CD8-positive, alpha-beta T cell (primary cell): ENCODE measurements at regions of chr2 and their contacts with region 1.

Region 1: DNA sequence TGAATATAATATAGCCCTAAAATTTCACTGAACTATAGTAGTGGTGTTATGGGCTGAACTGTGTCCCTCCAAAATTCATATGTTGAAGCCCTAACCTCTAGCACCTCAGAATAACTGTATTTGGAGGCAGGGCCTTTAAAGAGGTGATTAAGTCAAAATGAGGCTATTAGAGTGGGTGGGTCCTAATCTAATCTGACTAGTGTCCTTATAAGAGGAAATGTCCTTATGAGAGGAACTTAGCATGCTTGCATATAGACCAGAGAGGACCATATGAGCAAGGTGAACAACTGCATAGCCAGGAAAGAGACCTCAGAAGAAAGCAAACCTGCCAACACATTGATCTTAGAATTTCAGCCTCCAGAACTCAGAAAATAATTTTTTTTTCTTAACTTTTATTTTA is 238.4 kb downstream of the ZEB2 start:
- DNase-seq: no peak
- ATAC-seq: no peak
- H3K4me3 ChIP-seq: no peak overlapping the region
- H3K4me3 Mint-ChIP-seq: no peak overlapping the region
- H3K27ac ChIP-seq: no peak overlapping the region
- H3K27ac Mint-ChIP-seq: no peak overlapping the region
- H3K4me1 ChIP-seq: no peaks in the 10 kb centered on the region
- H3K4me1 Mint-ChIP-seq: peaks cover 35% of the 10 kb centered on the region
- H3K27me3 ChIP-seq: no peaks in the 10 kb centered on the region
- H3K27me3 Mint-ChIP-seq: no peaks in the 10 kb centered on the region
- CTCF ChIP-seq: no peak

Region 2: GRCh38 chr2:144237830-144238627 is 43.4 kb before region 1 on chr2:
- CTCF ChIA-PET with region 1: no interaction called
- POLR2A ChIA-PET with region 1: interaction called, 3 read pairs
- intact Hi-C with region 1: loop called in 1 of 2 experiments (anchors 2 kb)
- DNase-seq: peak in 1 of 9 experiments; percentile 35
- ATAC-seq: no peak
- H3K4me3 ChIP-seq: no peak overlapping the region
- H3K4me3 Mint-ChIP-seq: no peak overlapping the region
- H3K27ac ChIP-seq: no peak overlapping the region
- H3K27ac Mint-ChIP-seq: peak overlapping the region; percentile 12
- H3K4me1 ChIP-seq: peaks cover 24% of the 10 kb centered on the region
- H3K4me1 Mint-ChIP-seq: peaks cover 71% of the 10 kb centered on the region
- H3K27me3 ChIP-seq: no peaks in the 10 kb centered on the region
- H3K27me3 Mint-ChIP-seq: no peaks in the 10 kb centered on the region
- CTCF ChIP-seq: no peak

Region 3: DNA sequence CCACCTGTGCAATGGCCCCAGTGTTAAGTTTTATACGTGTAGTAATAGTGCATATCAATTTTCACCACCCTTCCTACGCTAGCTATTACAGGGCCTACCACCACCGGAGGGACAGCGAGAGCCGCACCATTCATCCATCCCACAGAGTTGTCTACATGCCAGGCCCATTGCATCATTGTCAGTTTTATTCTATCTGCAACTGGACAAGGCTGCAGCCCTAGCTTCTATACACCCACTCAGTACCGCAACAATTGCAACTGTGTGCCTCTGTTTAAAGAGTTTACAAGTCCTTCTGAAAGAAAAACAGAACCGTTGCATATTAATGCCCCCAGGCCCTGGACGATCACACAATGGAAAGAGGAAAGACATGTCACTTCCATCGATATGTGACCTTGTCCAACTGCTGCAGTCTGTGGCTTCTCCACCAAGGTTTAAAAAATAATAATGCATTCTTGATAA is 179.9 kb after region 1 on chr2:
- CTCF ChIA-PET with region 1: no interaction called
- POLR2A ChIA-PET with region 1: no interaction called
- intact Hi-C with region 1: no loop called
- DNase-seq: no peak
- ATAC-seq: no peak
- H3K4me3 ChIP-seq: no peak overlapping the region
- H3K4me3 Mint-ChIP-seq: no peak overlapping the region
- H3K27ac ChIP-seq: peak overlapping the region; percentile 56 to 98
- H3K27ac Mint-ChIP-seq: no peak overlapping the region
- H3K4me1 ChIP-seq: no peaks in the 10 kb centered on the region
- H3K4me1 Mint-ChIP-seq: peaks cover 12% of the 10 kb centered on the region
- H3K27me3 ChIP-seq: no peaks in the 10 kb centered on the region
- H3K27me3 Mint-ChIP-seq: no peaks in the 10 kb centered on the region
- CTCF ChIP-seq: no peak